Mammary epithelial cell (primary cell): ENCODE measurements at regions of chr1 and their contacts with region 1.

Region 1: DNA sequence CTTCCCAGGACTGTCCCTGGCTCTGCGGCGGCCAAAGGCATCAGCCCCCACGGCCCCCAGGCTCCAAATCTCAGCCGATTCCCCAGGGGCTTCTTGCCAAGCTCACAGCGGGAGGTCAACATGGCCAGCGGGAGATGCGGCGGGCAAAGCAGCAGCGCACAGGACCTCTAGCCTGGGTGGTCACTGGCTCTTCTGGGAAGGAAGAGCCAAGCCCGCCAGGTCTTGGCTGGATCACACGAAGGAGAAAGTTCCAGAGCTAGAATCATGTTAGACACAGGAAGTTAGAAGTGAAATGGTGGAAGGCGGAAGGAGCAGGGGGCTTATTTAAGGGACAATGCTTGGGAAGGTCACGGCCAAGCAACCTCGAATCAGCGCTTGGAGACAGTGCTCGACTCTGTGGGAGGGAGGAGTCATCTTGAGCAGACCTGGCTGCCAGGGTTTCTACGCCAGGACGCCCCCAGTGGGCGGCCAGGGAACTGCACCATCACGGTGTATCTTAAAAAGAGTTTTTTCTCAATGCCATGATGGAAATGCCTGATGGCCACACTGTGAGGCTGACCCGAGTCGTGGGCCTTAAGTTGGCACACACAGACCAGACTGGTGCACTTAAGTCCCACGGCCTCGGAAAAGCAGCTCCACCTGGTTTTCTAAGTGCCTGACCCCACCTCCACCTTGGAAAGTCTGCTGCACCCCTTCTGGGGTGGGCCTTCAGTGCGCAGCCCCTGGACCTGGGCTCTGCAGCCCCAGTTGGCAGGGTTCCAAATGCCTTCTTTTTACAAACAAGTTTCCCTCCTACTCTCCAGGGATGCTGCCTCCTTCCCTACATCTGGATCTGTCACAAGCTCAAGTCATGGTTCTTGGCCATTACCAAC is 29.3 kb downstream of the SLC66A1 start:
- DNase-seq: peak; percentile 59
- H3K4me3 ChIP-seq: no peak overlapping the region
- H3K27ac ChIP-seq: no peak overlapping the region
- H3K4me1 ChIP-seq: peaks cover 8% of the 10 kb centered on the region
- H3K27me3 ChIP-seq: no peaks in the 10 kb centered on the region
- CTCF ChIP-seq: peak; percentile 89 to 90

Region 2: DNA sequence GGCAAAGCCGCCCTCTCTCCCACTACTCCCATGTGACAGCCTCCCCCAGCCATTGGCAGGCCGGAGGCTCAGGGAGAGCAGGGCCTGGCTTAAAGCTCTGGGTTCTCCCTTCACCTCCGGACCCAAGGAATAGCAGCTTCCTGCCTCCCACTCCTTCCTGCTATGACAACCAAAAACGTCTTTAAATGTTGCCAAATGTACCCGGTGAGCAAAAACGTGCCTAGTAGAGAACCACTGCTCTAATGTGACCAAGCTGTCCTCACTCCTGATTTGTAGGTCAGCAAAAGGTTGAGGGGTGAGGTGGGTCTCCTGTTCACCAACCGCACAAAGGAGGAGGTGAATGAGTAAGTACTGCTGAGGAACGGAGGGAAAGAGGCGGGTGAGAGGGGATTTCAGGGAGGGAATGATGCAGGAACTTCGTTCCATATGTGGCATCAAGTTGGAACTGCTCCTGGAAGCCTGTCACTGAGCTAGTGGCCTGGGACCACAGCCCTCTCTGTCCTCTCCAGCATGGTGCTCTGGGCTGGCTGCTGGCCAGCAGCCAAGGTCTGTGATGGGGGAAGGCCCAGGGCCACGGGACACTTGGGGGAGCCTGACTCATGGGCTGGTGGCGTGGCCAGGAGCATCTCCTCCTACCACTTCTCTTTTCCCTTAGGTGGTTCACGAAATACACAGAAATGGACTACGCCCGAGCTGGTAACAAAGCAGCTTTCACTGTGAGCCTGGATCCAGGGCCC is 84.1 kb before region 1 on chr1:
- CTCF ChIA-PET with region 1: no interaction called
- dilution Hi-C with region 1: loop called (anchors 5 kb)
- in situ Hi-C with region 1: no loop called
- intact Hi-C with region 1: no loop called
- DNase-seq: no peak
- H3K4me3 ChIP-seq: no peak overlapping the region
- H3K27ac ChIP-seq: no peak overlapping the region
- H3K4me1 ChIP-seq: peaks cover 28% of the 10 kb centered on the region
- H3K27me3 ChIP-seq: no peaks in the 10 kb centered on the region
- CTCF ChIP-seq: no peak

Region 3: GRCh38 chr1:19287436-19288185 is 53.8 kb before region 1 on chr1:
- CTCF ChIA-PET with region 1: no interaction called
- dilution Hi-C with region 1: no loop called
- in situ Hi-C with region 1: no loop called
- intact Hi-C with region 1: no loop called
- DNase-seq: no peak
- H3K4me3 ChIP-seq: no peak overlapping the region
- H3K27ac ChIP-seq: no peak overlapping the region
- H3K4me1 ChIP-seq: peaks cover 7% of the 10 kb centered on the region
- H3K27me3 ChIP-seq: no peaks in the 10 kb centered on the region
- CTCF ChIP-seq: no peak

Region 4: DNA sequence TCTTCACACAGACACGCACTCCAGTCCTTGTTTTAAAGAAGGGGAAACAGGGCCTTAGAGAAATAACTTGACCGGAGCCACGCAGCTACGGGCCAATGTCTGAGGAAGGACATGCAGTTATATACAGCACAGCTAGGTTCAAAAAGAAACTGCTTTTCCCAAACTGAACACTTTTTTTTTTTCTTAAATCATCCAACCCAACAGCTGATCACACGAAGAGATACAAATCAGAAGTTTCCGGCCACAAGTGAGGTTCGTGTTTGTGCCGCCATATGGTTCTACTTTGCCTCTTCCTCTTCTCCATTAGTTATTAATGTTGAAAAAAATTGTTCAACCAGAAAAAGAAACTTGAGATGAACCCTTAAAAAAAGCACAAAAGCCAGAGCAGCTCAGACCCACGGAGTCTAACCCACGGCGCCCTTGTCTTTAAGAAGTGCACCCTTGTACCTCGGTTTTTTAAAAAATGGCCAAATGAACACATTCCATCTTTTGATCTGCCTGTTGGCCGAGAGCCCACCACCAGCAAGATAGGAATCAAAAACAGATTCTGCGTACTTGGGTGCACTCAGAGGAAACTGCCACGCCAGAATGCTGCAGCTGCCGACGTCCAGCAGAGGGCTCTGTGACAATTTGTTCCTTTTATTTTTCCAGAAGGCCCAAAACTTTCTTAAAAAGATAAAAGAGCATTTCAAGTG is 49.6 kb after region 1 on chr1:
- CTCF ChIA-PET with region 1: no interaction called
- dilution Hi-C with region 1: loop called (anchors 5 kb)
- in situ Hi-C with region 1: no loop called
- intact Hi-C with region 1: loop called (anchors 2 kb)
- DNase-seq: peak; percentile 25
- H3K4me3 ChIP-seq: no peak overlapping the region
- H3K27ac ChIP-seq: peak overlapping the region; percentile 4
- H3K4me1 ChIP-seq: peaks cover 34% of the 10 kb centered on the region
- H3K27me3 ChIP-seq: no peaks in the 10 kb centered on the region
- CTCF ChIP-seq: peak; percentile 82

Region 5: GRCh38 chr1:19398309-19398760 is 56.9 kb after region 1 on chr1:
- CTCF ChIA-PET with region 1: no interaction called
- dilution Hi-C with region 1: loop called (anchors 5 kb)
- in situ Hi-C with region 1: no loop called
- intact Hi-C with region 1: no loop called
- DNase-seq: peak; percentile 45
- H3K4me3 ChIP-seq: no peak overlapping the region
- H3K27ac ChIP-seq: no peak overlapping the region
- H3K4me1 ChIP-seq: peaks cover 17% of the 10 kb centered on the region
- H3K27me3 ChIP-seq: no peaks in the 10 kb centered on the region
- CTCF ChIP-seq: peak; percentile 21 to 30

Region 6: DNA sequence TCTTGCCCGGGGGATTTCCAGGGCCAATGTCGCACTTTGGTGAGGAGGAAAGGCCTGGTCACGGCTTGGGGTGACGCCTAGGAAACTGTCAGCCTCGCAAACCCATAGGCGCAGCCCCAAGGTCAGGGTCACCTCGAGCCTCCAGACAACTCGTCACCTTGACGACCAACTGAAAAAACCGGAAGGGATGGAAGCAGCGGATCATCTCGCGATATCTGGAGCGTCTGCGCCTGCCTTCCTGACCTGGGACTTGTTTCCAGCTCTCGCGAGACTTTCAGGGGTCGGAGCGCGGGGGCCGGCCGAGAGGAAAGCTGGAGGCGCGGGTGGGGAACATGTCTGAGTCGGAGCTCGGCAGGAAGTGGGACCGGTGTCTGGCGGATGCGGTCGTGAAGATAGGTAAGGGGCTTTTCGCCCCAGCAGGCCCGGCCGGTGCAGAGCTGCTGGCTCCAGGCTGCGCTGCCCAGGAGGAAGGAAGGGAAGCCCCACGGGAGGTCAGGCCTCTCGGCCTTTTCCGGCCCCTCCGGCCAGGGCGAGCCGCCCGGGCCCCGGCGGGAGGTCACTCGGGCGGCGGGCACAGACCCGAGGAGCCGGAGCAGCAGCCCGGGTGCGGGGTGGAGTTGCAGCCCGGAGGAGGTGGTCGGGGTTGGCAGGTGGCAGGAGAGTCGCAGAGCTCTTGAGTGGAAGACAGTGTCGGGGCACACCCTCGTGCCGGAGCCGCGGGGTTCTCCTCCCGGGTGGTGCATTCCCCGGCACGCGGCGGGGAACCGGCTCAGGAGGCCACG is 255.5 kb after region 1 on chr1:
- CTCF ChIA-PET with region 1: no interaction called
- dilution Hi-C with region 1: loop called (anchors 5 kb)
- in situ Hi-C with region 1: no loop called
- intact Hi-C with region 1: no loop called
- DNase-seq: peak; percentile 97
- H3K4me3 ChIP-seq: peak overlapping the region; percentile 92 to 96 (median 95)
- H3K27ac ChIP-seq: peak overlapping the region; percentile 96
- H3K4me1 ChIP-seq: peaks cover 14% of the 10 kb centered on the region
- H3K27me3 ChIP-seq: no peaks in the 10 kb centered on the region
- CTCF ChIP-seq: no peak